ENCODE measurements at regions of chr7 and their contacts with region 1.

Region 1: GRCh38 chr7:5773661-5774086 is 7.8 kb downstream of the RNF216 start:
- DNase-seq: peak in 5 of 9 experiments; percentile 5 to 48 (median 26)
- ATAC-seq: no peak
- H3K4me3 ChIP-seq: no peak overlapping the region
- H3K4me3 Mint-ChIP-seq: no peak overlapping the region
- H3K27ac ChIP-seq: no peak overlapping the region
- H3K27ac Mint-ChIP-seq: no peak overlapping the region
- H3K4me1 ChIP-seq: peaks cover 50% of the 10 kb centered on the region
- H3K4me1 Mint-ChIP-seq: peaks cover 71% of the 10 kb centered on the region
- H3K27me3 ChIP-seq: no peaks in the 10 kb centered on the region
- H3K27me3 Mint-ChIP-seq: no peaks in the 10 kb centered on the region
- CTCF ChIP-seq: no peak

Region 2: GRCh38 chr7:5689118-5689517 is 84.6 kb before region 1 on chr7:
- CTCF ChIA-PET with region 1: no interaction called
- POLR2A ChIA-PET with region 1: no interaction called
- intact Hi-C with region 1: loop called in 1 of 2 experiments (anchors 1 kb)
- DNase-seq: peak in 6 of 9 experiments; percentile 26 to 82 (median 58)
- ATAC-seq: peak; percentile 62
- H3K4me3 ChIP-seq: peak overlapping the region in 1 of 2 experiments; percentile 29
- H3K4me3 Mint-ChIP-seq: peak overlapping the region; percentile 73
- H3K27ac ChIP-seq: peak overlapping the region; percentile 42 to 61
- H3K27ac Mint-ChIP-seq: peak overlapping the region; percentile 94
- H3K4me1 ChIP-seq: peaks cover 91% of the 10 kb centered on the region
- H3K4me1 Mint-ChIP-seq: peaks cover 88% of the 10 kb centered on the region
- H3K27me3 ChIP-seq: no peaks in the 10 kb centered on the region
- H3K27me3 Mint-ChIP-seq: no peaks in the 10 kb centered on the region
- CTCF ChIP-seq: no peak

Region 3: GRCh38 chr7:6205971-6206660 is 432.4 kb after region 1 on chr7:
- CTCF ChIA-PET with region 1: no interaction called
- POLR2A ChIA-PET with region 1: no interaction called
- intact Hi-C with region 1: no loop called
- DNase-seq: no peak
- ATAC-seq: no peak
- H3K4me3 ChIP-seq: no peak overlapping the region
- H3K4me3 Mint-ChIP-seq: no peak overlapping the region
- H3K27ac ChIP-seq: no peak overlapping the region
- H3K27ac Mint-ChIP-seq: no peak overlapping the region
- H3K4me1 ChIP-seq: no peaks in the 10 kb centered on the region
- H3K4me1 Mint-ChIP-seq: no peaks in the 10 kb centered on the region
- H3K27me3 ChIP-seq: no peaks in the 10 kb centered on the region
- H3K27me3 Mint-ChIP-seq: no peaks in the 10 kb centered on the region
- CTCF ChIP-seq: no peak